PC-9 (cell line): ENCODE measurements at regions of chr12 and their contacts with region 1.

Region 1: DNA sequence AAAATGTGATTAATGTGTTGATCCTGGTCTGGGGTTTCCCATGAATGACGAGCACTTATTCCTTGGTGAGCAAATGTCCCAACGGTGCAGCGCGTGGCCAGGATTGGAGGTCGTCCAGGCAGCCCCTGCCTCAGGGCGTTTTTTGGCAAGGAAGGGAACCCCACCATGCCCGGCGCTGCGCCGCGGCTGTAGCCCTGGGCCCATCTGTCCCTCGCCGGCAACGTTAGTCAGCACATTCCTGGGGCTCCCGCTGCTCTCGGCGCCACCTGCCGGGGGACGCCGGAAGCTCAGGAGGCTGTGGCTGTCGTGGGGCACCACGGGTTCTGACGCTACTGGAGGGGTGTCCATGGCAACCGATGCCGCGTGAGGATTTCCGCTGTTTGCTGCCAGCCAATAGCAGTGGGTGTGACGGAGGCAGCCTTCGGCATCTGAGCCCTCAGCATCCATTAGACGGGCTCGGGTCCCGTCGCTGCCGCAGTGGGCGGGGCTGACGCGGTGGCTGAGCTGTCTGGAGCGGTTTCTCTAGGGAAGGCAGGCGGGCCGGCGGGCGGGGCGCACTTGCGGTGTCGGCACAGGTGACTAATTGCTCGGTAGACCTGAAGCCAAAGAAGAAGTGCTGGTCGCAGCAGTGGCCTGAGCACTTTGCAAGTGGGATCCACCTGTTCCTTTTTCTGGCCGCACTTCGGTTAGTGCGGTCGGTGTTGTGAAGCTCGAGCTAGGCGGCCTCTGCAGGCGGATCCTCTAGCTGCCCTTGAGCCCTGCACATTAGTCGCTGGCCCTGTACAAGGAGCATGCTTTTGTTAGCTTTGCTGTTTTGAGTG is 29.5 kb downstream of the RAB35 start:
- DNase-seq: peak; percentile 91 to 98
- H3K4me3 ChIP-seq: peak overlapping the region; percentile 45; the same call in 1 of the 2 replicates
- H3K27ac ChIP-seq: peak overlapping the region; percentile 76
- H3K4me1 ChIP-seq: peaks cover 22% of the 10 kb centered on the region
- H3K27me3 ChIP-seq: no peaks in the 10 kb centered on the region
- CTCF ChIP-seq: peak; percentile 84

Region 2: DNA sequence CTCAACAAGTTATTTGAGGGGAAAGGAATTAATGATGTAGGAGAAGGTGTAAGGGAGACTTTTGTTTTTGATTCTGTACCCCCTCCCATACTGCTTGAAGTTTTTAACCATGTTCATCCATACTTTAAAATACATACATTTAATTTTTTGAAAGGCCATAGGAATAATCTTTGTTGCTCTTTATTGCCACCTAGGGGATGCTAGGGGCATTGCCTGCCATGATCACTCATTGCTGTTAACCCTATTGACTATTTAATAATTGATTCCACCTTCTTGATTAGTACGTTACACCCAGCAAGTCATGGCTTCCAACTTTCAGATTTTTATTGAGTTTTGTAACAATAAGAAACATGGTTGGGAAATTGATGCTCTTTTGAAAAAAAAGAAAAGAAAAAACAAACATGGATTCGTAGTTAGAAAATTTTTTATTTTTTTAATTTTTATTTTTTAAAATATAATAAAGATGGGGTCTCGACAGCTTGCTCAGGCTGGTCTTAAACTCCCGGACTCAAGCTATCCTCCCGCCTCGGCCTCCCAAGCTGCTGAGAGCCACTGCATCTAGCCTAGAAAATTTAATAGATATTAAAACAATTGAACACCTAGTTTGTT is 427.6 kb before region 1 on chr12:
- CTCF ChIA-PET with region 1: interaction called, 13 read pairs
- POLR2A ChIA-PET with region 1: no interaction called
- intact Hi-C with region 1: no loop called
- DNase-seq: peak in 1 of 2 experiments; percentile 17
- H3K4me3 ChIP-seq: no peak overlapping the region
- H3K27ac ChIP-seq: no peak overlapping the region
- H3K4me1 ChIP-seq: no peaks in the 10 kb centered on the region
- H3K27me3 ChIP-seq: peaks cover 4% of the 10 kb centered on the region; the same call in 1 of the 2 replicates
- CTCF ChIP-seq: peak; percentile 89

Region 3: GRCh38 chr12:119876761-119877638 is 210.0 kb before region 1 on chr12 and contains the start of gene CIT:
- CTCF ChIA-PET with region 1: no interaction called
- POLR2A ChIA-PET with region 1: no interaction called
- intact Hi-C with region 1: loop called (anchors 2 kb)
- DNase-seq: peak; percentile 80 to 87
- H3K4me3 ChIP-seq: peak within 1 kb of the TSS; percentile 91
- H3K27ac ChIP-seq: no peak within 1 kb of the TSS
- H3K4me1 ChIP-seq: peaks cover 10% of the 10 kb centered on the region; the same call in 1 of the 2 replicates
- H3K27me3 ChIP-seq: no peaks in the 10 kb centered on the region
- CTCF ChIP-seq: no peak
- total RNA-seq, gene CIT: 73.9 and 81.8 TPM in 2 replicates

Region 4: DNA sequence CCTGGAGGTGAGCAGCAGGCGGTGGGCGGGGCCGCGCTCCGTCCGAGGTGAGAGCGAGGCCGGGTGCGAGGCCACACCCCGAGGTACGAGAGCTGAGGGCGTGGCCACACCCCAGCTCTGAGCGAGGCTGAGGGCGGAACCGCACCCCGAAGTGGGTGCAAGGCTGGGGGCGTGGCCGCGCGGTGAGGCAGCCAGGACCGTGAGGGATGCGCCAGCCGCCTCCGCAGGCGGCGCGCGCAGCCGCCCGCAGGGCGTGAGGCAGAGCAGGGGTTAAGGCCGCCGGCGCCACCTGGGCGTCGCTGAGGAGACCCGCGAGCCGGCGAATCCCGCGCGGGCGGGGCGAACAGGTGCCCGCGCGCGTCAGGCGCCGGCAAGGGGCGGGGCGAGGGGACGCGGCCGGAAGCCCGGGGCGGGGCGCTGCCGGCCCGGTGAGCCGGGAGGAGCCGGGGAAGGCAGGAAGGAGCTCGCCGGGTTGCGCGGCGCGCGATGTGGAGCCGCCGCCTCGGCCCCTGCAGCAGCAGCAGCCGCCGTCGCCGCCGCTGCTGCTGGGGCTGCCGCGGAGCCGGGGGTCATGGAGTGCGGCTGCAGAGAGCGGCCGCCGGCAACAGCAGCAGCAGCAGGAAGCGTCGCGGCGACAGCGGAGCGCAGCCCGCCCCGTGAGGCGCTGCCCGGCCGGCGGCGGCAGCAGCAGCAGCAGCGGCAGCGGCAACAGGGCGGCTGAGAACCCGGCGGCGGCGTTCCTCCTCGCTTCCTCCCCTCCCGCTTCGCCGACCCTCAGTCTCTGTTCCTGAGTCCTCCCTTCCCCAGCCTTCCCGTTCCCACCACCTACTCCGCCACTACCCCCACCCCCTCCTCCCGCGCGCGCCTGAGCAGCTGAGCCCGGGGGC is 98.0 kb before region 1 on chr12 and contains the start of gene BICDL1:
- CTCF ChIA-PET with region 1: interaction called, 10 read pairs
- POLR2A ChIA-PET with region 1: no interaction called
- intact Hi-C with region 1: loop called (anchors 1 kb)
- DNase-seq: peak; percentile 82 to 96
- H3K4me3 ChIP-seq: peak within 1 kb of the TSS; percentile 68
- H3K27ac ChIP-seq: peak within 1 kb of the TSS; percentile 27
- H3K4me1 ChIP-seq: peaks cover 21% of the 10 kb centered on the region
- H3K27me3 ChIP-seq: no peaks in the 10 kb centered on the region
- CTCF ChIP-seq: peak; percentile 1; the same call in 1 of the 2 replicates
- total RNA-seq, gene BICDL1: 14.4 and 18.6 TPM in 2 replicates

Region 5: DNA sequence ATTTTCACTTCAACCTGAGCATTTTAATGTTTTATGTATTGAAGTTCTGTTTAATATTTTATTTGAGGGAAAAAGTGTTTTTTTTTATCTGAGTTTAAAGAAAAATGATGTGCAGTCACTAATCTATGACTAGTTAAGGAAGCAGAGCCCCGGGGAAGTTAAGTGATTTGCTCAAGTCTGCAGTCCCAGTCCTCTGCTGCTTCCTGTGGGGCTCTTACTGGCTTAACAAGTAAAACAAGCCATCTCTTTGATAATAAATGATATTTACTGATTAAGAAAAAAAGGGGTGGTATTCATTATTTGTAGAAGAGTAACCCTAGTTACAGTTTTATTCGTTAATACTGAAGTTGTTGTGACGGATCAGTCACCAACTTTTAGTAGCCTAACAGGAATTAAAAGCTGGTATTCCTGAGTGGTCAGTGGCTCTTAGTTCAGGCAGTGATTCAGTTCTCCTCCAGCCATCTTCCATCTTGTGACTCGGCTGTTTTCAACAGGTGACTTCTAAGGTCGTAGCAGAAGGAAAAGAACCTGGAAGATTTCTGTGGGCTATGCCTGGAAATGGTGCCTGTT is 76.3 kb before region 1 on chr12:
- CTCF ChIA-PET with region 1: no interaction called
- POLR2A ChIA-PET with region 1: no interaction called
- intact Hi-C with region 1: loop called (anchors 2 kb)
- DNase-seq: peak in 1 of 2 experiments; percentile 62
- H3K4me3 ChIP-seq: no peak overlapping the region
- H3K27ac ChIP-seq: peak overlapping the region; percentile 39
- H3K4me1 ChIP-seq: peaks cover 25% of the 10 kb centered on the region
- H3K27me3 ChIP-seq: no peaks in the 10 kb centered on the region
- CTCF ChIP-seq: no peak